AG04449 (cell line): ENCODE measurements at regions of chr12 and their contacts with region 1.

Region 1: DNA sequence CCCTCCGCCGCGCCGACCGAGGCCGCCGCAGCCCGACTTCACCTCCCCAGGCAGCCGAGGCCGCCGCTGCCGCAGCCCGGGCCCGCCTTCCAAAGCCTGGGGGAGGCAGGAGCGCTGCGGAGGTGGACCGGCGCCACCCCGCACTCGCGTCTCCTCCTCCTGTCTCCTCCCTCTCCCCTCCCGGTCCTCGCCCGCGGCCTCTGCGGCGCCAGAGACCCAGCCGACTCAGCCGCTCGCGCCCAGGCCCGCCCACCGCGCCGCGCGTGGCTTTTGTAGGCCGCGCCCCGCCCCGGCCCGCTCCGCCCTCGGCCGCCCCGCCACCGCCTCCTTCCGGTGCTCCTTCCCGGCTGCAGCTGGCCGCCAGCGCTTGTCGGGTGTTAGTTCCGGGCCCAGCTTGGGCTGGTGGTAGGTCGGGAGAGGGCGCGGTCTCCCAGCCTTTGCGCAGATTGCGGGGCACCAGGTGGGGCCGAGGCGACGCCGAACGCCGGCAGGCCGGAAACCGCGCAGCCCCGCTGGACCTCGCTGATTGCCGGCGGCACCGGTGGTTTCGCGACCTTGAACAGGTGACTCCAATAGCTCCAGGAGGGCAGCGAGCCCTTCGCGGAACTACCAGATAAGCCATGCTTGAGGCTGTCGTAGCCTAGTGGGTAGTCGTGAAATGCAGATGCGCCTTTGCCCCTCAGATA is at the start of gene CAPRIN2:
- DNase-seq: peak; percentile 33
- H3K4me3 ChIP-seq: peak within 1 kb of the TSS; percentile 77
- CTCF ChIP-seq: peak; percentile 57

Region 2: DNA sequence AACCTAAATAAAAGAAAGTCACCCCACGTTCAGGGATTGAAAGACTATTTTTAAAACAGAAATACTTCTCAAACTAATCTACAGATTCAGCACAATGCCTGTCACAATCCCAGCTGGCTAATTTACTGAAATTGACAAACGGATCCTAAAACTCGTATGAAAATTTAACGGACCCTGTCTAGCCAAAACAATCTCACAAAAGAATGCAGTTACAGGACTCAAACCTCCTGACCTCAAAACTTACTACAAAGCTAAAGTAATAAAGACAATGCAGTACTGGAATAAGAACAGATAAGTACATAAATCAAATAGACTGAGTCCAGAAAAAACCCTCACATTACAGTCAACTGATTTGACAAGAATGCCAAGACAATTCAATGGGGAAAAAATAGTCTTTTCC is 108.0 kb before region 1 on chr12:
- CTCF ChIA-PET with region 1: no interaction called
- POLR2A ChIA-PET with region 1: no interaction called
- DNase-seq: no peak
- H3K4me3 ChIP-seq: no peak overlapping the region
- CTCF ChIP-seq: no peak

Region 3: GRCh38 chr12:30744321-30744720 is 10.5 kb before region 1 on chr12:
- CTCF ChIA-PET with region 1: interaction called, 24 read pairs
- POLR2A ChIA-PET with region 1: no interaction called
- DNase-seq: no peak
- H3K4me3 ChIP-seq: no peak overlapping the region
- CTCF ChIP-seq: no peak

Region 4: DNA sequence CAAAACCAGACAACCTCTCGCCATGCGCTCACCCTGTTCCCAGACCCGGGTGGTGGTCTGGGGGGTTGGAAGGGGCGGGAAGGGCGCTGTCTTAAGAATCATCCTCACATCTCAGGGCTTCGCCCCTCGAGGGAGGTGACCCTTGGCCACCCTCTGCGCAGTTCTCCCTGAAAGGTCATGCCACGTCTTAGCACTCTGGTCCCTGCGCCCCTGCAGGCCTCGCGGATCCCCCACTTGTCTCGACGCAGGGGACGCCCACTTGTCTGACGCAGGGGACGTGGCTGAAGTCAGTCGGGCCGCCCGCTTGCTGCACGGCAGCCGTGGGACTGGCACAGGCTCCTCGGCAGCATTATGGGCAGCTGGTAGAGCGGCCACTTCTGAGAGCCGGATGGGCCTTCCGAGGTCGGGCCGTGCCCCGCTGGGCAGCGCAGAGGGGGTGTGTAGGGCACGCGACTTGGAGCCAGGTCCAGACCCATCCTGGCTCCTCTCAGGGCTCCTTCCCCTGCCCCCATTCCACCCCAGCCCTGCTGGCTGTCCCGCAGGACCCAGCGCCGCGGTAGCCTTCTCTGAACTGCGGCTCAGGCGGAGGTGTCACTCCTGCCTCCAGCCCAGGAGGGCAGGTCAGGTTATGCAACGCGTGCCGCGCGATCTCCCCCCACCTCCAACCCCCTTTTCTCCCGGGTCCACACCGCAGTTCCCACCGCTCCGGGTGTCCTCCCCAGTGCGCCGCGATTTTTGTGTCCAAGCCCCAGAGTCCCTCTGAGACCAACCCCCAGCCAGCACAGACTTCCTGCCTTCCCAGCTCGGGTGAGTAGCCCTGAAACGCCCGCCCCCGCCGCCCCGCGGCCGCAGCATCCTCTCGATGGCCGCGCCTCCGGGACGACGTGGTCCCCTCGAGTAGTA is 40.8 kb after region 1 on chr12:
- CTCF ChIA-PET with region 1: interaction called, 8 read pairs
- POLR2A ChIA-PET with region 1: interaction called, 45 read pairs
- DNase-seq: no peak
- H3K4me3 ChIP-seq: peak overlapping the region; percentile 72
- CTCF ChIP-seq: peak; percentile 20

Region 5: DNA sequence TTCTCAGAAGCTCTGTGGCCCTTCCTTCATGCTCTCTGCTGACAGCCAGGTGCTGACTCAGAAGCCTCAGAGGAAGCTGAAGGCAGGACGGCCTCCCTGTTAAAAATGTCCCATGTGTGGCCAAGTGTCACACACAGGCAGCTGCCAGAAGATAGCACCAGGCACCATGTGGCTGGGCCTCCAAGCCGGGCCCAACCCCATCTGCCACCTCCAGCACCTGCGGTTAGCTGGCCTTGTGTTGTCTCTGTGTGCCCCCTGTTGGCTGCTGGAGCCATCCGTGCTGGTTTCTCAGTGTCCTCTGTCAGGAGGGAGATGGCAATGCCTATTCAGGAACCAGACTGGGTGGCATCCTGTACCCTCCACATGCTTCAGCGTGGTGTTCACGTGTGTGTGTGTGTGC is 234.9 kb after region 1 on chr12:
- CTCF ChIA-PET with region 1: no interaction called
- POLR2A ChIA-PET with region 1: no interaction called
- DNase-seq: no peak
- H3K4me3 ChIP-seq: no peak overlapping the region
- CTCF ChIP-seq: peak; percentile 37

Region 6: GRCh38 chr12:31238764-31239387 is 484.0 kb after region 1 on chr12:
- CTCF ChIA-PET with region 1: no interaction called
- POLR2A ChIA-PET with region 1: no interaction called
- DNase-seq: no peak
- H3K4me3 ChIP-seq: no peak overlapping the region; the same call in 1 of the 2 replicates
- CTCF ChIP-seq: peak; percentile 66